ENCODE measurements at regions of chr5 and their contacts with region 1.

Region 1: DNA sequence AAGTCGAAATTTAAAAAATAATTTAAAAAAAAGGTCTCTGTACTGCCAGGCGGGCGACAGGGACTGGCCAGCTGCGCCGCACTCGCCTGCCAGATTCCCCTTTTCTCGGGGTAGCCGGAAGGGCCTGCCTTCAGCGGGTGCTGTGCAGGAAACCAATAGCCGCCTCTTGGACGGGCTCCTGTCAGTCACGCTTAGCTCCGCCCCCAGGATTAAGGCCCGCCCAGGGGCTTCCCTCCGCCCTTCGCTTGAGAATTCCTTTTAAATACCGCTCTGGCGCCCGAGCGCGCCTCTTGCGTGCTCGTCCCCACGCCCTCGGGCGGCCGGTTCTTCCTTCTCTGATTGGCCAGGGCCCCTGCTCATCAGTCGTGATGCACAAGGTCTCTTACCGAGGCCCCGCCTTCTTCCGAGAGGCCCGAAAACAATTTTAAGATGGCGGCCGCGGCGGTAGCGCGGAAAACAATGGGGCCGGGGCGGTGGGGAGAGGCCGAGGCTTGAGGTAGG is at the start of gene MAML1:
- DNase-seq: peak; percentile 95 to 100 (median 99)
- ATAC-seq: peak; percentile 97
- H3K4me3 ChIP-seq: peak within 1 kb of the TSS; percentile 70
- H3K4me3 Mint-ChIP-seq: peak within 1 kb of the TSS; percentile 91 to 96 (median 94)
- H3K27ac ChIP-seq: peak within 1 kb of the TSS; percentile 100
- H3K27ac Mint-ChIP-seq: peak within 1 kb of the TSS; percentile 84 to 99 (median 95)
- H3K4me1 ChIP-seq: peaks cover 25 to 35% of the 10 kb centered on the region in 2 donors
- H3K4me1 Mint-ChIP-seq: peaks cover 21 to 52% (median 38%) of the 10 kb centered on the region in 7 donors
- H3K27me3 ChIP-seq: no peaks in the 10 kb centered on the region
- H3K27me3 Mint-ChIP-seq: no peaks in the 10 kb centered on the region
- total RNA-seq, gene MAML1: 26.4 to 51.2 (median 35.5) TPM

Region 2: GRCh38 chr5:179559284-179560252 is 172.9 kb before region 1 on chr5:
- CTCF ChIA-PET with region 1: no interaction called
- POLR2A ChIA-PET with region 1: interaction called, 3 read pairs
- intact Hi-C with region 1: loop called in 1 of 2 experiments (anchors 2 kb)
- DNase-seq: peak; percentile 77 to 97 (median 86)
- ATAC-seq: peak; percentile 100
- H3K4me3 ChIP-seq: peak overlapping the region; percentile 75
- H3K4me3 Mint-ChIP-seq: peak overlapping the region; percentile 85 to 95 (median 91)
- H3K27ac ChIP-seq: peak overlapping the region; percentile 70
- H3K27ac Mint-ChIP-seq: peak overlapping the region; percentile 81 to 96 (median 93)
- H3K4me1 ChIP-seq: peaks cover 3 to 4% of the 10 kb centered on the region in 2 donors
- H3K4me1 Mint-ChIP-seq: peaks cover 11 to 46% (median 32%) of the 10 kb centered on the region in 7 donors
- H3K27me3 ChIP-seq: no peaks in the 10 kb centered on the region
- H3K27me3 Mint-ChIP-seq: no peaks in the 10 kb centered on the region

Region 3: DNA sequence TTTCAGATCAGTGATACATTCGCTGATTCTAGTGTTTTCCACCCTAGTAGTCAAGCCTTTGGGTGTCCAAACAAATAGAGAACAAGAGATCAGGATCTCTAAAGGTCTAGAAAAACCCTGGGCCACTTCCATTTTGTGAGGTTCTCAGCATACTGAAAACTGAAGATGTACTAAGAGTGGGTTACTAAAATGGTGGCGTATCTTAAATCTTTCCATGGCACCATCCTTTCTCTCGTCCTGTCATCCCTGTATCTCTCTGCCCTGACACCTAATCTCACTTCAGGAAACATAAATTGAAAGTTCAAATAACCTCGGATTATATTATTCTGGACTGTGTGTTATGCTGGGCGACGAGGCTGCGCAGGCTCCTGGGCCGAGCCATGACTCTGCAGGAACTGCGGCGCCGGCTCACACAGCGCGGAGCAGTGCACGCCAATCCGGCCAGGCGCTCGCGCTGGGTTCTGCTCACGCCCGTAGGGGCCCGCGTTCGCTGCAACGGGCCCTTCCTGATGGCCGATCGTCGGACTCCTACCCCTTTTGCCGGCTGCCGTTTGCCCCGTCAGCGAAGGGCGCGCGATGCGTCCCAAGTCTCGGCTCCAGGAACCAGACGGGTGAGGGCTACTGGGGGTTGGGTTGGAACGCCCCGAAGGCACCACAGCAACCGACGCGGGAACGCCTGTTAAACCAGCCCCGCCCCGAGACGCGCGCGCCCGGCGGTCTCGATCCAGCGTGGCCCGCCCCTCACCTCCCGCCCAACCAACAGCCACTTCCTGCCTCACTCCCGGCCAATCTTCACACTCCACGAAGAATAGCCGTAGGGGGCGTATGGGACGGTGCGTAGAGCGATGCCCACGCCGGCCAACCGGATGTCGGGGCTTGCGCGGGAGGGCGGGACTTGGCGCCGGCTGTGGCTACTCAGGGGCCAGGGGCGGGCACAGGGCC is 34.2 kb before region 1 on chr5:
- CTCF ChIA-PET with region 1: interaction called, 4 read pairs
- POLR2A ChIA-PET with region 1: interaction called, 13 read pairs
- intact Hi-C with region 1: loop called (anchors 1 kb)
- DNase-seq: peak; percentile 94 to 99 (median 99)
- ATAC-seq: peak; percentile 93
- H3K4me3 ChIP-seq: peak overlapping the region; percentile 72
- H3K4me3 Mint-ChIP-seq: peak overlapping the region; percentile 89 to 97 (median 96)
- H3K27ac ChIP-seq: peak overlapping the region; percentile 100
- H3K27ac Mint-ChIP-seq: peak overlapping the region; percentile 94 to 100 (median 98)
- H3K4me1 ChIP-seq: peaks cover 21 to 25% of the 10 kb centered on the region in 2 donors
- H3K4me1 Mint-ChIP-seq: peaks cover 23 to 53% (median 46%) of the 10 kb centered on the region in 7 donors
- H3K27me3 ChIP-seq: no peaks in the 10 kb centered on the region
- H3K27me3 Mint-ChIP-seq: no peaks in the 10 kb centered on the region

Region 4: DNA sequence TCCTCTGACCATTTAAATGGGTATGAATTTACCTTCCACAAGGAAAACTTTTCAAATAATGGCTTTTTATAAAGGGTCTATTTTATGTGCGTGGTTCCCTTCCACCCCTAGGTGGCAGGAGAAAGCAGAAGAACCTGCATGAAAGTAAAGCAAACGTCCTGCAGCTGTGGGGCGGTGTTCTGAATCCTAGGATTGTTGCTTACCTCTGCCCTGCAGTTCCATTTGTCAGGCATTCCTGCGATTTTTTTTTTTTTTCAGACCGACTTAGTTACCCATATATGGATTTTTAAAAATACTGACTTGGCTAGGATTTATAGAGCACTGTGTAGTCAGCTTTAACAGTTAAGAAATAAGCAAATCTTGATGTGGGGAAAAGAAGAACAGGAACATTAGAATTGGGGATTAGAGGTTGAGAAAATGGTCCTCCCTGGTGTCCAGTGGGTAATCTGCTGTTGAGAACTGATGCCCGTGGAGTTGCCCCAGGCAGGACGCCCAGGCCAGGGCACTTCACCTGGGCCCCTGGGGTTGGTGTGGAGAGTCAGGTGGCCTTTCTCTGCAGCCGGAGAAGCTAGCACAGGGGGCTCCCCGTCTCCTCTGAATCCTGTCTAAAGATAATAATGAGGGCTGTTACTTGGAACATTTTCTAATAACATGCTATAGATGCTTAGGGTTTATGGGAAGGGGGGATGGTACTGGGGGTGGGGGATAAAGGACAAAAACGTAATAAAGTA is 30.9 kb after region 1 on chr5:
- CTCF ChIA-PET with region 1: interaction called, 3 read pairs
- POLR2A ChIA-PET with region 1: interaction called, 4 read pairs
- intact Hi-C with region 1: loop called (anchors 1 to 2 kb)
- DNase-seq: peak in 8 of 9 donors; percentile 32 to 64 (median 51)
- ATAC-seq: peak; percentile 75
- H3K4me3 ChIP-seq: no peak overlapping the region
- H3K4me3 Mint-ChIP-seq: peak overlapping the region in 2 of 10 donors; percentile 12 to 29
- H3K27ac ChIP-seq: no peak overlapping the region
- H3K27ac Mint-ChIP-seq: peak overlapping the region in 6 of 9 donors; percentile 10 to 90 (median 49)
- H3K4me1 ChIP-seq: peaks cover 7 to 13% of the 10 kb centered on the region in 2 donors
- H3K4me1 Mint-ChIP-seq: peaks cover 48 to 70% (median 57%) of the 10 kb centered on the region in 7 donors
- H3K27me3 ChIP-seq: no peaks in the 10 kb centered on the region
- H3K27me3 Mint-ChIP-seq: no peaks in the 10 kb centered on the region

Region 5: GRCh38 chr5:179821581-179822432 is 89.3 kb after region 1 on chr5:
- CTCF ChIA-PET with region 1: no interaction called
- POLR2A ChIA-PET with region 1: interaction called, 3 read pairs
- intact Hi-C with region 1: loop called (anchors 1 kb)
- DNase-seq: peak; percentile 72 to 88 (median 85)
- ATAC-seq: peak; percentile 73
- H3K4me3 ChIP-seq: peak overlapping the region; percentile 87
- H3K4me3 Mint-ChIP-seq: peak overlapping the region; percentile 88 to 98 (median 95)
- H3K27ac ChIP-seq: peak overlapping the region; percentile 96
- H3K27ac Mint-ChIP-seq: peak overlapping the region; percentile 79 to 97 (median 94)
- H3K4me1 ChIP-seq: peaks cover 31 to 36% of the 10 kb centered on the region in 2 donors
- H3K4me1 Mint-ChIP-seq: peaks cover 30 to 62% (median 45%) of the 10 kb centered on the region in 7 donors
- H3K27me3 ChIP-seq: no peaks in the 10 kb centered on the region
- H3K27me3 Mint-ChIP-seq: no peaks in the 10 kb centered on the region

Region 6: DNA sequence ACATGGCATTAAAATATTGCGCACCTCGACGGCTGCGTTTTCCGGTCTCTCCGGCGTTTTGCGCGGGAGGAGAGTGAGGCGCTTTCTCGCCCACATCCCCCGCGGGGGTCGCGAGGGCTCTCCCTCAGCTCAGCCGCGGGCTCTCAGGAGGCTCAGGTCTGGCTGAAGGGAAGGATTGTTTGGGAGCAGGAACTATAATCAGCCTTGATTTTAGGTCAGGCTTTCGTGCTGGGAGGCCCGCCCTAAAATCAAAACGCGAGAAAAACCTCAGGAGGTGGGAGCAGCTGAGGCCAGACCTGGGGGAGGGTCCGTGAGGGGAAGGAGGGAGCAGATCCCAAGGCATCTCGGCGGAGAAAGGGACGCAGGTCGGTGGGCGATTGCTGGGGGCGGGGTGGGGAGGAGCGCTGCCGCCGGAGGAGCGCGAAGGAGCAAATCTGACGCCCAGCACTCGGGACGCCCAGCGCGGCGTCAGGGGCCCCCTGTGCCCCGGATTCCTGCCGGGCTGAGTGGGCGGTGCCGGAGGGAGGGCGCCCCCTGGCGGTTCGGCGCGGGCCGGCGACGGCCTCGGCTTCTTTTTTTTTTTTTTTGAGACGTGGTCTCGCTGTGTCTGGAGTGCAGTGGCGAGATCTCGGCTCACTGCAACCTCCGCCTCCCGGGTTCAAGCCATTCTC is 357.8 kb after region 1 on chr5:
- CTCF ChIA-PET with region 1: no interaction called
- POLR2A ChIA-PET with region 1: no interaction called
- intact Hi-C with region 1: loop called in 1 of 2 experiments (anchors 1 kb)
- DNase-seq: peak; percentile 71 to 90 (median 85)
- ATAC-seq: peak; percentile 90
- H3K4me3 ChIP-seq: peak overlapping the region; percentile 81
- H3K4me3 Mint-ChIP-seq: peak overlapping the region; percentile 82 to 92 (median 88)
- H3K27ac ChIP-seq: peak overlapping the region; percentile 63
- H3K27ac Mint-ChIP-seq: peak overlapping the region in 8 of 9 donors; percentile 48 to 95 (median 84)
- H3K4me1 ChIP-seq: peaks cover 6% of the 10 kb centered on the region in 2 donors
- H3K4me1 Mint-ChIP-seq: peaks cover 6 to 34% (median 27%) of the 10 kb centered on the region in 7 donors
- H3K27me3 ChIP-seq: no peaks in the 10 kb centered on the region
- H3K27me3 Mint-ChIP-seq: peaks cover 0 to 10% (median 0%) of the 10 kb centered on the region in 5 donors